CD4-positive, alpha-beta memory T cell (primary cell): ENCODE measurements at regions of chr10 and their contacts with region 1.

Region 1: GRCh38 chr10:35635576-35635975 is 6.5 kb downstream of the FZD8 start:
- DNase-seq: peak in 4 of 5 donors; percentile 53 to 69 (median 62)
- H3K4me3 ChIP-seq: no peak overlapping the region
- H3K4me3 Mint-ChIP-seq: no peak overlapping the region
- H3K27ac ChIP-seq: no peak overlapping the region
- H3K27ac Mint-ChIP-seq: no peak overlapping the region
- H3K4me1 ChIP-seq: peaks cover 13% of the 10 kb centered on the region
- H3K4me1 Mint-ChIP-seq: peaks cover 8 to 31% (median 9%) of the 10 kb centered on the region in 4 donors
- H3K27me3 ChIP-seq: peaks cover 22% of the 10 kb centered on the region
- H3K27me3 Mint-ChIP-seq: peaks cover 20 to 22% of the 10 kb centered on the region in 2 donors

Region 2: DNA sequence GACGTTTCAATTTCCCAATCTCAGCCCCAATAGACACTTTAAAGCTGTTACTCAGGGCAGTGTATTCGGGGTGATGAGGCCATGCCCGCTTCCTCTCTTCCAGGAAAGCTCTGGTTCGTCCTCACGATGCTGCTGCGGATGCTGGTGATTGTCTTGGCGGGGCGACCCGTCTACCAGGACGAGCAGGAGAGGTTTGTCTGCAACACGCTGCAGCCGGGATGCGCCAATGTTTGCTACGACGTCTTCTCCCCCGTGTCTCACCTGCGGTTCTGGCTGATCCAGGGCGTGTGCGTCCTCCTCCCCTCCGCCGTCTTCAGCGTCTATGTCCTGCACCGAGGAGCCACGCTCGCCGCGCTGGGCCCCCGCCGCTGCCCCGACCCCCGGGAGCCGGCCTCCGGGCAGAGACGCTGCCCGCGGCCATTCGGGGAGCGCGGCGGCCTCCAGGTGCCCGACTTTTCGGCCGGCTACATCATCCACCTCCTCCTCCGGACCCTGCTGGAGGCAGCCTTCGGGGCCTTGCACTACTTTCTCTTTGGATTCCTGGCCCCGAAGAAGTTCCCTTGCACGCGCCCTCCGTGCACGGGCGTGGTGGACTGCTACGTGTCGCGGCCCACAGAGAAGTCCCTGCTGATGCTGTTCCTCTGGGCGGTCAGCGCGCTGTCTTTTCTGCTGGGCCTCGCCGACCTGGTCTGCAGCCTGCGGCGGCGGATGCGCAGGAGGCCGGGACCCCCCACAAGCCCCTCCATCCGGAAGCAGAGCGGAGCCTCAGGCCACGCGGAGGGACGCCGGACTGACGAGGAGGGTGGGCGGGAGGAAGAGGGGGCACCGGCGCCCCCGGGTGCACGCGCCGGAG is 27.9 kb before region 1 on chr10:
- CTCF ChIA-PET with region 1: no interaction called
- POLR2A ChIA-PET with region 1: no interaction called
- intact Hi-C with region 1: no loop called
- DNase-seq: peak in 1 of 5 donors; percentile 1
- H3K4me3 ChIP-seq: no peak overlapping the region
- H3K4me3 Mint-ChIP-seq: peak overlapping the region; percentile 59 to 84 (median 76)
- H3K27ac ChIP-seq: no peak overlapping the region
- H3K27ac Mint-ChIP-seq: peak overlapping the region in 2 of 7 donors; percentile 12 to 65
- H3K4me1 ChIP-seq: no peaks in the 10 kb centered on the region
- H3K4me1 Mint-ChIP-seq: peaks cover 4 to 6% (median 5%) of the 10 kb centered on the region in 4 donors
- H3K27me3 ChIP-seq: peaks cover 10% of the 10 kb centered on the region
- H3K27me3 Mint-ChIP-seq: peaks cover 35 to 36% of the 10 kb centered on the region in 2 donors

Region 3: GRCh38 chr10:35781643-35782035 is 146.1 kb after region 1 on chr10:
- CTCF ChIA-PET with region 1: interaction called, 5 read pairs
- POLR2A ChIA-PET with region 1: no interaction called
- intact Hi-C with region 1: loop called (anchors 5 kb)
- DNase-seq: no peak
- H3K4me3 ChIP-seq: no peak overlapping the region
- H3K4me3 Mint-ChIP-seq: no peak overlapping the region
- H3K27ac ChIP-seq: no peak overlapping the region
- H3K27ac Mint-ChIP-seq: no peak overlapping the region
- H3K4me1 ChIP-seq: no peaks in the 10 kb centered on the region
- H3K4me1 Mint-ChIP-seq: no peaks in the 10 kb centered on the region
- H3K27me3 ChIP-seq: no peaks in the 10 kb centered on the region
- H3K27me3 Mint-ChIP-seq: peaks cover 0 to 4% of the 10 kb centered on the region in 2 donors

Region 4: GRCh38 chr10:35916791-35917190 is 281.2 kb after region 1 on chr10:
- CTCF ChIA-PET with region 1: no interaction called
- POLR2A ChIA-PET with region 1: no interaction called
- intact Hi-C with region 1: loop called (anchors 2 kb)
- DNase-seq: no peak
- H3K4me3 ChIP-seq: no peak overlapping the region
- H3K4me3 Mint-ChIP-seq: no peak overlapping the region
- H3K27ac ChIP-seq: no peak overlapping the region
- H3K27ac Mint-ChIP-seq: no peak overlapping the region
- H3K4me1 ChIP-seq: no peaks in the 10 kb centered on the region
- H3K4me1 Mint-ChIP-seq: no peaks in the 10 kb centered on the region
- H3K27me3 ChIP-seq: no peaks in the 10 kb centered on the region
- H3K27me3 Mint-ChIP-seq: peaks cover 0 to 2% of the 10 kb centered on the region in 2 donors

Region 5: GRCh38 chr10:37495415-37495814 is 1859.8 kb after region 1 on chr10:
- CTCF ChIA-PET with region 1: interaction called, 4 read pairs
- POLR2A ChIA-PET with region 1: no interaction called
- intact Hi-C with region 1: loop called (anchors 5 kb)
- DNase-seq: no peak
- H3K4me3 ChIP-seq: no peak overlapping the region
- H3K4me3 Mint-ChIP-seq: no peak overlapping the region
- H3K27ac ChIP-seq: no peak overlapping the region
- H3K27ac Mint-ChIP-seq: no peak overlapping the region
- H3K4me1 ChIP-seq: no peaks in the 10 kb centered on the region
- H3K4me1 Mint-ChIP-seq: no peaks in the 10 kb centered on the region
- H3K27me3 ChIP-seq: no peaks in the 10 kb centered on the region
- H3K27me3 Mint-ChIP-seq: no peaks in the 10 kb centered on the region